ENCODE measurements at regions of chr7 and their contacts with region 1.

Region 1: DNA sequence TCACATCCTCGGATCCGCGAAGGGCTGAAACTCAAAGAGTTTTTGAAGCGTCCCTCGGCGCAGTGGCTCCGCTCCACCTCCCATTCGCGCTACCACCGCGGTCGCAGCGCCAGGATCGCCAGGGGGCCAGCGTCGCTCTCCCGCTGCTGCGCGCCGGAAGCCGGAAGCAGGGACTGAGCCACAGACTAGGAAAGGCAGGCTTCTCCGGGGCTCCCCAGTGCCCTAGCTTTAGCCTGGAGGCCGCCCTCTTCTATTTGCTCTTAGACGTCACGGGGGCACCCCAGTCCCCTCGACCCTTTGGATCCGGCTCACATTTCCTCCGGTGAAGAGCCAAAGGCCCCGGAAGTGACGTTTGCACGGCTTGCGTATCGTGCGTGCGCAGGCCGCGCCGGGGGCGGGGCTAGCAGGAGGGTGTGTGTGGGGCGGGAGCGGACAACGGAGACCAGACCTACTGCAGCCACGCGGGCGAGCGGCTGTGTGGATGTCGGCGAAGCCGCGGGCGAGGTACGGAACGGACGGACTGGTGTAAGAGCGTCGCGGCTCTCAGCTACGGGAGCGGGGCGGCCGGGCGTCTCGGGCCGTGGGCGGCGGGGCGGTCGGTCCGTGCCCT is 25.5 kb downstream of the KCTD7 start:
- DNase-seq: peak; percentile 99
- H3K4me3 ChIP-seq: peak overlapping the region; percentile 79
- H3K27ac ChIP-seq: peak overlapping the region; percentile 97
- H3K4me1 ChIP-seq: no peaks in the 10 kb centered on the region
- H3K27me3 ChIP-seq: no peaks in the 10 kb centered on the region
- CTCF ChIP-seq: no peak

Region 2: GRCh38 chr7:66591799-66592596 is 62.2 kb before region 1 on chr7:
- intact Hi-C with region 1: loop called (anchors 10 kb)
- DNase-seq: peak; percentile 96
- H3K4me3 ChIP-seq: peak overlapping the region; percentile 93
- H3K27ac ChIP-seq: peak overlapping the region; percentile 98
- H3K4me1 ChIP-seq: no peaks in the 10 kb centered on the region
- H3K27me3 ChIP-seq: no peaks in the 10 kb centered on the region
- CTCF ChIP-seq: no peak

Region 3: DNA sequence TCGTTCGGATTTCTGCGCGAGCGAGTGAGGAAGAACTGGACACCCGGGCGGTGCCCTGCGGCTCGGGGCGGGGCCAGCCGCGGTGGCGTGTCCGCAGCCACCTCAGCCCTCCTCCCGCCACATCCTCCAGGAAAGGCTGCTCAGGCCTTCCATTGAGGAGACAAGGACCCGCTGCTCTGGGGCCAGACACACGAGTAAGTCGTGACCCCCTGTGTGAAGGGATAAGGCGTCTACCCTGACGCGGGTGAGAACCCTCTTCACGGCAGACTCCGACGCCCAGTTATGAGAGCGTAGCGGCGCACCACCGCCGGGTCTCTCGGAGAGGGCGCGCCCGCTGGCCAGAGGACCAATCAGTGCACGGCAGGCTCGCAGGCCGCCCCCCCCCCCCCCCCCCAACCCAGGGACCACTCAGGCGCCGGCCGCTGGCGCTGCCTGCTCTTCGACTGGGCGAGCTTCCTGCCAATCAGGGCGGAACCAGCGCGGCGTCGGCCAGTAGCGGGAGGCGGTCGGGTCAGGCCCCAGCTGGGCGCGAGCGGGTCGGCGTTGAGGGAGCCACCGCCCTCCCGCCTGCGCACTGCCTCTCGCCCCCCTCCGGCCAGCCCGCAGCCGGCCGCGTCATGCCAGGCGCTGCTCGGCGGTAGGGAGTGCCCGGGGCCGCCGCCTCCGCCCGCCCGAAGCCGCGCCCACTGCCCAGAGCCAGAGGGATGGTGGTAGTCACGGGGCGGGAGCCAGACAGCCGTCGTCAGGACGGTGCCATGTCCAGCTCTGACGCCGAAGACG is 25.7 kb before region 1 on chr7 and contains the start of gene KCTD7:
- intact Hi-C with region 1: loop called (anchors 1 kb)
- DNase-seq: peak; percentile 97
- H3K4me3 ChIP-seq: peak within 1 kb of the TSS; percentile 64
- H3K27ac ChIP-seq: peak within 1 kb of the TSS; percentile 88
- H3K4me1 ChIP-seq: peaks cover 7% of the 10 kb centered on the region
- H3K27me3 ChIP-seq: no peaks in the 10 kb centered on the region
- CTCF ChIP-seq: no peak
- total RNA-seq, gene KCTD7: 4.1 to 6.1 TPM

Measured in colonic mucosa (tissue), 4 donors.